Mammary epithelial cell (primary cell): ENCODE measurements at regions of chr12 and their contacts with region 1.

Region 1: GRCh38 chr12:84842406-84843013 is 70.1 kb downstream of the SLC6A15 start:
- DNase-seq: peak; percentile 30
- H3K4me3 ChIP-seq: no peak overlapping the region
- H3K27ac ChIP-seq: no peak overlapping the region
- H3K4me1 ChIP-seq: no peaks in the 10 kb centered on the region
- H3K27me3 ChIP-seq: no peaks in the 10 kb centered on the region
- CTCF ChIP-seq: peak; percentile 81

Region 2: DNA sequence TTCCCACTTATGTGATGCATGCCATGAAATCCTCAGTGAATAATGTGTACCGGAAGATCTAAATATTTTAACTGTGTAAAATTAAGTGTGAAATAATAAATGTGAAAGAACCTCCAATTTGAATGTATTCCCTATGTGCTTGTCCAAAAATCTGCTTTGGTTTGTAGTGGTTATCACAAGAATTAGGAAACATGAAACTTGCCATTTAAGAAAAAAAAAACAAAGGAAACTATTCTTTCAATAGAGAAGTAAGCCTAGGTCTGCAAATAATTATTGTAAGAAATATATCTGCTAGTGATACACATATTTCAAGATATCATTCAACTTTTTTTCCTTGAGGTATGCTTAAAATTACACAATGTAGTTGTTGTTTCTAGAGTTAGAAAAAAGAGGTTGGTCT is 430.3 kb before region 1 on chr12:
- CTCF ChIA-PET with region 1: no interaction called
- dilution Hi-C with region 1: no loop called
- in situ Hi-C with region 1: no loop called
- intact Hi-C with region 1: loop called (anchors 10 kb)
- DNase-seq: no peak
- H3K4me3 ChIP-seq: no peak overlapping the region
- H3K27ac ChIP-seq: no peak overlapping the region
- H3K4me1 ChIP-seq: no peaks in the 10 kb centered on the region
- H3K27me3 ChIP-seq: no peaks in the 10 kb centered on the region
- CTCF ChIP-seq: no peak

Region 3: GRCh38 chr12:84624601-84625000 is 217.9 kb before region 1 on chr12:
- CTCF ChIA-PET with region 1: no interaction called
- dilution Hi-C with region 1: no loop called
- in situ Hi-C with region 1: no loop called
- intact Hi-C with region 1: loop called (anchors 5 kb)
- DNase-seq: no peak
- H3K4me3 ChIP-seq: no peak overlapping the region
- H3K27ac ChIP-seq: no peak overlapping the region
- H3K4me1 ChIP-seq: no peaks in the 10 kb centered on the region
- H3K27me3 ChIP-seq: peaks cover 2% of the 10 kb centered on the region
- CTCF ChIP-seq: no peak

Region 4: GRCh38 chr12:84793558-84794296 is 48.8 kb before region 1 on chr12:
- CTCF ChIA-PET with region 1: no interaction called
- dilution Hi-C with region 1: no loop called
- in situ Hi-C with region 1: no loop called
- intact Hi-C with region 1: loop called (anchors 5 kb)
- DNase-seq: peak; percentile 70
- H3K4me3 ChIP-seq: no peak overlapping the region
- H3K27ac ChIP-seq: no peak overlapping the region
- H3K4me1 ChIP-seq: peaks cover 19% of the 10 kb centered on the region
- H3K27me3 ChIP-seq: no peaks in the 10 kb centered on the region
- CTCF ChIP-seq: no peak

Region 5: DNA sequence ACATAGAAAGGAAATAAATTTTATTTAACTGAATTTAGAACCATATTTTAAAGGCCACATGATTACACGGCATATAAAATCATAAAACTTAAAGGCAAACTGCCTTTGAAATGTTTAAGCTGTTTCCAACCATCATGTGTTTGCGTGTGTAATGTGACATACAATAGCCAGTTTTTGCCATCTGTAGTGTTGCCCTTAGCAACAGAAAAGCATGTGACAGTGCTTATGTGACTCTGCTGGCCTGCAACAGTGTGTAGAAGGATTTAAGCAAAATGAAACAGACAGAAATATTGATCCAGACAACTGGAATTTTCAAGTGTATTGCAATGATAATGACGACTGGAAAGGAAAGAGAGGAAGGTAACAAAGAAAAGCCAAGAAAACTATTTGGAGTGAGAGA is 144.1 kb after region 1 on chr12:
- CTCF ChIA-PET with region 1: no interaction called
- dilution Hi-C with region 1: no loop called
- in situ Hi-C with region 1: no loop called
- intact Hi-C with region 1: no loop called
- DNase-seq: no peak
- H3K4me3 ChIP-seq: no peak overlapping the region
- H3K27ac ChIP-seq: no peak overlapping the region
- H3K4me1 ChIP-seq: no peaks in the 10 kb centered on the region
- H3K27me3 ChIP-seq: no peaks in the 10 kb centered on the region
- CTCF ChIP-seq: no peak

Region 6: GRCh38 chr12:85058339-85058738 is 215.8 kb after region 1 on chr12:
- CTCF ChIA-PET with region 1: no interaction called
- dilution Hi-C with region 1: no loop called
- in situ Hi-C with region 1: no loop called
- intact Hi-C with region 1: no loop called
- DNase-seq: no peak
- H3K4me3 ChIP-seq: no peak overlapping the region
- H3K27ac ChIP-seq: no peak overlapping the region
- H3K4me1 ChIP-seq: no peaks in the 10 kb centered on the region
- H3K27me3 ChIP-seq: no peaks in the 10 kb centered on the region
- CTCF ChIP-seq: no peak